Brain microvascular endothelial cell (primary cell): ENCODE measurements at regions of chr13 and their contacts with region 1.

Region 1: GRCh38 chr13:95156208-95156607 is 145.0 kb downstream of the ABCC4 start:
- DNase-seq: peak; percentile 36
- H3K4me3 ChIP-seq: no peak overlapping the region
- H3K27ac ChIP-seq: no peak overlapping the region
- H3K27me3 ChIP-seq: no peaks in the 10 kb centered on the region
- CTCF ChIP-seq: peak; percentile 54

Region 2: GRCh38 chr13:94674609-94675348 is 481.4 kb before region 1 on chr13:
- in situ Hi-C with region 1: loop called (anchors 25 kb)
- DNase-seq: peak; percentile 26
- H3K4me3 ChIP-seq: no peak overlapping the region
- H3K27ac ChIP-seq: no peak overlapping the region
- H3K27me3 ChIP-seq: no peaks in the 10 kb centered on the region
- CTCF ChIP-seq: peak; percentile 85

Region 3: GRCh38 chr13:95378603-95379002 is 222.4 kb after region 1 on chr13:
- in situ Hi-C with region 1: no loop called
- DNase-seq: no peak
- H3K4me3 ChIP-seq: no peak overlapping the region
- H3K27ac ChIP-seq: no peak overlapping the region
- H3K27me3 ChIP-seq: no peaks in the 10 kb centered on the region
- CTCF ChIP-seq: no peak

Region 4: GRCh38 chr13:95471960-95472359 is 315.8 kb after region 1 on chr13:
- in situ Hi-C with region 1: no loop called
- DNase-seq: no peak
- H3K4me3 ChIP-seq: no peak overlapping the region
- H3K27ac ChIP-seq: no peak overlapping the region
- H3K27me3 ChIP-seq: no peaks in the 10 kb centered on the region
- CTCF ChIP-seq: no peak